CD8-positive, alpha-beta T cell (primary cell): ENCODE measurements at regions of chr11 and their contacts with region 1.

Region 1: DNA sequence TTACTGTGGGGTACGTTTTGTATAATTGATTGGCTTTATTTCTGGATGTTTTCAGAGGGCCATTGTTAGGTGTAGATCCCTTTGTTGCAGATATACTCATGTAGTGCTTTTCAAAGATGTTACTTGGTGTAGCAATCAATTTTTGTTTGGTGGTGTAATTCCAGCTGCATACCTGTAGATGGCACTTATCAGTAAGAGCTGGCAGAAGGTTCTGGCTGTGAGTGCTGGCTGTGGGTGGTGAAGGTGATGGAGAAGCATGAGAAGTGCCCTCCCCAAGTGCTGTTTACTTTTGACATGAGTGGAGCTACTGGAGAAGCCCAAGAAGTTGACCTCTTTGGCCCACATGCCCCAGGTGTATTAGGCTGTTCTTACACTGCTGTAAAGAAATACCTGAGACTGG is 1074.9 kb downstream of the FAM181B start:
- DNase-seq: peak in 2 of 9 experiments; percentile 3 to 6
- ATAC-seq: no peak
- H3K4me3 ChIP-seq: no peak overlapping the region
- H3K4me3 Mint-ChIP-seq: no peak overlapping the region
- H3K27ac ChIP-seq: no peak overlapping the region
- H3K27ac Mint-ChIP-seq: no peak overlapping the region
- H3K4me1 ChIP-seq: no peaks in the 10 kb centered on the region
- H3K4me1 Mint-ChIP-seq: no peaks in the 10 kb centered on the region
- H3K27me3 ChIP-seq: no peaks in the 10 kb centered on the region
- H3K27me3 Mint-ChIP-seq: peaks cover 7% of the 10 kb centered on the region
- CTCF ChIP-seq: no peak

Region 2: GRCh38 chr11:81585390-81586192 is 73.1 kb before region 1 on chr11:
- CTCF ChIA-PET with region 1: no interaction called
- POLR2A ChIA-PET with region 1: no interaction called
- intact Hi-C with region 1: no loop called
- DNase-seq: no peak
- ATAC-seq: no peak
- H3K4me3 ChIP-seq: no peak overlapping the region
- H3K4me3 Mint-ChIP-seq: no peak overlapping the region
- H3K27ac ChIP-seq: no peak overlapping the region
- H3K27ac Mint-ChIP-seq: no peak overlapping the region
- H3K4me1 ChIP-seq: no peaks in the 10 kb centered on the region
- H3K4me1 Mint-ChIP-seq: no peaks in the 10 kb centered on the region
- H3K27me3 ChIP-seq: no peaks in the 10 kb centered on the region
- H3K27me3 Mint-ChIP-seq: no peaks in the 10 kb centered on the region
- CTCF ChIP-seq: no peak

Region 3: GRCh38 chr11:81674211-81674610 is 15.5 kb after region 1 on chr11:
- CTCF ChIA-PET with region 1: no interaction called
- POLR2A ChIA-PET with region 1: no interaction called
- intact Hi-C with region 1: no loop called
- DNase-seq: no peak
- ATAC-seq: no peak
- H3K4me3 ChIP-seq: no peak overlapping the region
- H3K4me3 Mint-ChIP-seq: no peak overlapping the region
- H3K27ac ChIP-seq: no peak overlapping the region
- H3K27ac Mint-ChIP-seq: no peak overlapping the region
- H3K4me1 ChIP-seq: no peaks in the 10 kb centered on the region
- H3K4me1 Mint-ChIP-seq: no peaks in the 10 kb centered on the region
- H3K27me3 ChIP-seq: peaks cover 0 to 4% of the 10 kb centered on the region in 2 experiments
- H3K27me3 Mint-ChIP-seq: no peaks in the 10 kb centered on the region
- CTCF ChIP-seq: no peak

Region 4: GRCh38 chr11:81707881-81708280 is 49.2 kb after region 1 on chr11:
- CTCF ChIA-PET with region 1: no interaction called
- POLR2A ChIA-PET with region 1: no interaction called
- intact Hi-C with region 1: loop called in 1 of 2 experiments (anchors 1 kb)
- DNase-seq: no peak
- ATAC-seq: no peak
- H3K4me3 ChIP-seq: no peak overlapping the region
- H3K4me3 Mint-ChIP-seq: no peak overlapping the region
- H3K27ac ChIP-seq: no peak overlapping the region
- H3K27ac Mint-ChIP-seq: no peak overlapping the region
- H3K4me1 ChIP-seq: no peaks in the 10 kb centered on the region
- H3K4me1 Mint-ChIP-seq: no peaks in the 10 kb centered on the region
- H3K27me3 ChIP-seq: no peaks in the 10 kb centered on the region
- H3K27me3 Mint-ChIP-seq: peaks cover 8% of the 10 kb centered on the region
- CTCF ChIP-seq: no peak

Region 5: DNA sequence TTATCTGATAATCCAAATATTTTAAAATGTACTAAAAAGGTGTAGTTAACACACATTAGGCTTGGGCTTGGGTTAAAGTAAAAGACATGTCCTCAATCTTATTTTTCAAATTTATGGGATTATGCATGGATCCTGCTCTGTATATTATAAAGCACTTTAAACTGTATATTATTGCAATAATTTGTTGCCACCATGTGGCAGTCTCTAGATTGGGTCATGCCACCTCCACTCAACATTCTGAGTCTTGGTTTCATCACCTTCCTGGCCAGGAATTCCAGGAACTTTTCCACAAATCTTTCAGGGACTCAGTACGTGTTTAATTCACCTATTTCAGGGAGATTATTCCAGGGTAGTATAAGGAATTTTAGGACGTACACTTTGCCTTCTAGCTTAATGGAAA is 379.4 kb after region 1 on chr11:
- CTCF ChIA-PET with region 1: no interaction called
- POLR2A ChIA-PET with region 1: no interaction called
- intact Hi-C with region 1: loop called in 1 of 2 experiments (anchors 5 kb)
- DNase-seq: peak in 2 of 9 experiments; percentile 3 to 6
- ATAC-seq: no peak
- H3K4me3 ChIP-seq: no peak overlapping the region
- H3K4me3 Mint-ChIP-seq: no peak overlapping the region
- H3K27ac ChIP-seq: no peak overlapping the region
- H3K27ac Mint-ChIP-seq: no peak overlapping the region
- H3K4me1 ChIP-seq: no peaks in the 10 kb centered on the region
- H3K4me1 Mint-ChIP-seq: no peaks in the 10 kb centered on the region
- H3K27me3 ChIP-seq: no peaks in the 10 kb centered on the region
- H3K27me3 Mint-ChIP-seq: no peaks in the 10 kb centered on the region
- CTCF ChIP-seq: no peak